K562 (cell line): ENCODE measurements at regions of chr15 and their contacts with region 1.

Region 1: DNA sequence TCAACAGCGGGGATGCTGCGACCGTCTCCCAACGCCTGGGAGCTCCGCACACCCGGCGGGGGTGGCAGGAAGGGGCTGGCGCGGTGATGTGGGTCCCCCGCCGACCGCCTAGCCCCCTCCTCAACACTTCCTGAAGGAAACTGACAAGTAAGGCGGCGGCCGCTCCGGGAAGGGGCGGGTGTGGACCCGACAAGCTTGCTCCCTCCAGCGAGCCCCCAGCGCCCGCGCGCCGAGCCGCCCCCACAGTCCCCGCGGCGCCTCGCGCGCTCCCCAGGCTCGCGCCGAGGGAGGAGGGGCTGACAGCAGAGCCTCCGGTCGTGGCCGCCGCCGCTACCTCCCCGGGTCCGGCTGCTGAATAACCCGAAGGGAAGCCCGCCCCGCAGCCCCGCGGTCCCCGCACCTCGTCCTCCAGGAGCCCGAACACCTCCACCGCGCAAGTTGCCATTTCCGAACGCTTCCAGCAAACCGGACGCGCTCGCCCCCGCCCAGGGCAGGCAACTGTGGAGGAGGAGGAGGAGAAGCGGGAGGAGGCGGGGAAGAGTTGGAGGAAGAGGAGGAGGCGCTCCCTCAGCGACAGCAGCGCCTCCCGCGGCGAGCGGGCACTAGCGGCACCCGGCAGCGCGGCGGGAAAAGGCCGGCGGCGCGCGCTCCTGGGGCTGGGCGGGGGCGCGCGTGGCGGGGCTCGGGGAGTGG is at the start of gene NEDD4:
- DNase-seq: peak; percentile 83 to 93 (median 87)
- ATAC-seq: peak; percentile 95
- H3K4me3 ChIP-seq: peak within 1 kb of the TSS; percentile 85
- H3K27ac ChIP-seq: peak within 1 kb of the TSS; percentile 85
- H3K4me1 ChIP-seq: peaks cover 3 to 18% of the 10 kb centered on the region in 2 experiments; a peak in 4 of 5 replicates
- H3K27me3 ChIP-seq: no peaks in the 10 kb centered on the region
- CTCF ChIP-seq: peak; percentile 49 to 71 (median 63)
- EP300 ChIP-seq: no peak
- POLR2A ChIP-seq: peak; percentile 82
- RAD21 ChIP-seq: no peak; a peak in 1 of 4 replicates
- polyA plus RNA-seq, gene NEDD4: 7.2 to 12.2 TPM

Region 2: GRCh38 chr15:56052395-56053045 is 59.3 kb after region 1 on chr15:
- CTCF ChIA-PET with region 1: no interaction called
- POLR2A ChIA-PET with region 1: no interaction called
- in situ Hi-C with region 1: no loop called
- intact Hi-C with region 1: loop called (anchors 2 kb)
- DNase-seq: peak; percentile 19 to 31 (median 24)
- ATAC-seq: peak; percentile 69
- H3K4me3 ChIP-seq: no peak overlapping the region
- H3K27ac ChIP-seq: no peak overlapping the region
- H3K4me1 ChIP-seq: peaks cover 0 to 6% of the 10 kb centered on the region in 2 experiments; a peak in 2 of 5 replicates
- H3K27me3 ChIP-seq: no peaks in the 10 kb centered on the region
- CTCF ChIP-seq: peak; percentile 51 to 70 (median 55); a peak in 5 of 6 replicates
- EP300 ChIP-seq: no peak
- POLR2A ChIP-seq: no peak
- RAD21 ChIP-seq: peak; percentile 37 to 79; a peak in 3 of 4 replicates

Region 3: DNA sequence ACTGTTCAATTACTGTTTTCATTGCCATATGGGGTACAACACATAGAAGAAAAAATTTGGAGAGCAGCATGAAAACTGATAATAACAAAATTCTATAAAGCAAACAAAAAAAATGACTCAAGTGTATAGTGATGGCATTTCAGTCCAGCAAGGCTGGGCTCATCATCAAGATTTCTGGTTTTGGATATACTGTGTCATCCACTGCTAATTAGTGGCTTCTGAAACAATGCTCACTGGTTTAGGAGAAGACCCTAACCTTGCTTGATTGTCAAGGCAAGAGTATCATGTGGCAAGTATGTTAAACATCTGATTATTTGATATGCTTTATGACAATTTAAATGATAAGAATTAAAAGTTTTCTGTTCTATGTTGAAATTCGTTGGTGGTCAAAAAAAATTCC is 153.5 kb after region 1 on chr15:
- CTCF ChIA-PET with region 1: no interaction called
- POLR2A ChIA-PET with region 1: no interaction called
- in situ Hi-C with region 1: no loop called
- intact Hi-C with region 1: no loop called
- DNase-seq: no peak
- ATAC-seq: no peak
- H3K4me3 ChIP-seq: no peak overlapping the region
- H3K27ac ChIP-seq: no peak overlapping the region
- H3K4me1 ChIP-seq: no peaks in the 10 kb centered on the region
- H3K27me3 ChIP-seq: no peaks in the 10 kb centered on the region
- CTCF ChIP-seq: no peak
- EP300 ChIP-seq: no peak
- POLR2A ChIP-seq: no peak
- RAD21 ChIP-seq: no peak